ENCODE measurements at regions of chr10 and their contacts with region 1.

Region 1: GRCh38 chr10:124864421-124865193 is 63.0 kb downstream of the ABRAXAS2 start:
- DNase-seq: peak; percentile 86 to 91
- H3K4me3 ChIP-seq: no peak overlapping the region
- H3K27ac ChIP-seq: peak overlapping the region; percentile 85
- H3K4me1 ChIP-seq: peaks cover 25% of the 10 kb centered on the region
- H3K27me3 ChIP-seq: no peaks in the 10 kb centered on the region
- CTCF ChIP-seq: no peak

Region 2: DNA sequence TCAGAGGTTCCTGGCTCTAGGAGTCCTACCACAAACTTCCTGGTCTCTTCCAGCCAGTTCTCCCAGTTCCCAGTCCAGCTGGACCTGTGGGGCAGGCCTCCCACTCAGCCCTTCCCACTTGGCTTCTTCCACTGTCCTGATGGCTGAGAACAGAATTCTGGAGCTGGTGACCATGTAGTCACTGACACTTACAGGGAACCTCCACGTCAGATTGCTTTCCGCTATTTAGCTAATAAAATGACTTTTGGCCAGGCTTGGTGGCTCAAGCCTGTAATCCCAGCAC is 13.8 kb after region 1 on chr10:
- CTCF ChIA-PET with region 1: no interaction called
- POLR2A ChIA-PET with region 1: no interaction called
- intact Hi-C with region 1: loop called (anchors 1 kb)
- DNase-seq: peak in 1 of 2 experiments; percentile 56
- H3K4me3 ChIP-seq: no peak overlapping the region
- H3K27ac ChIP-seq: peak overlapping the region; percentile 46
- H3K4me1 ChIP-seq: peaks cover 22% of the 10 kb centered on the region
- H3K27me3 ChIP-seq: no peaks in the 10 kb centered on the region
- CTCF ChIP-seq: no peak

Region 3: GRCh38 chr10:124886195-124886594 is 21.6 kb after region 1 on chr10:
- CTCF ChIA-PET with region 1: no interaction called
- POLR2A ChIA-PET with region 1: interaction called, 22 read pairs
- intact Hi-C with region 1: no loop called
- DNase-seq: no peak
- H3K4me3 ChIP-seq: no peak overlapping the region
- H3K27ac ChIP-seq: no peak overlapping the region
- H3K4me1 ChIP-seq: no peaks in the 10 kb centered on the region
- H3K27me3 ChIP-seq: no peaks in the 10 kb centered on the region
- CTCF ChIP-seq: no peak

Region 4: DNA sequence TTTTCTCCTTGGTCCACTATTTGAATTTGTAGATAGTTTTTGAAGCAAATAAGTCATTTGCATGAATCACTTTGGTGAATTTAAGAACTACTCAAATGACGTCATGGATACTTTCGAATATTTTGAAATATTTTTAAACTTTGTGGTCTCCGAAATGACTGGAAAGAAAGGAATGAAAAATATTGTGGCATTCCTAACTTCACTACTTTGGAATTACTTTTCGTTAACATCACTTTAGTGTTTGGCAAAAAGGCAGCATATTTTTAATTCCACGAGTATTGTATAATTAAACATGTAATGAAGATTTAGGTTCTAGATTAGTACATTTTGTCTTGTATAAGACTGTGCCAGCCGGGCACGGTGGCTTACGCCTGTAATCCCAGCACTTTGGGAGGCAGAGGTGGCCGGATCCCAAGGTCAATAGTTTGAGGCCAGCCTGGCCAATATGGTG is 42.0 kb after region 1 on chr10:
- CTCF ChIA-PET with region 1: no interaction called
- POLR2A ChIA-PET with region 1: no interaction called
- intact Hi-C with region 1: loop called (anchors 2 kb)
- DNase-seq: no peak
- H3K4me3 ChIP-seq: no peak overlapping the region
- H3K27ac ChIP-seq: no peak overlapping the region
- H3K4me1 ChIP-seq: no peaks in the 10 kb centered on the region
- H3K27me3 ChIP-seq: no peaks in the 10 kb centered on the region
- CTCF ChIP-seq: no peak

Region 5: GRCh38 chr10:125076891-125077541 is 212.4 kb after region 1 on chr10:
- CTCF ChIA-PET with region 1: no interaction called
- POLR2A ChIA-PET with region 1: no interaction called
- intact Hi-C with region 1: no loop called
- DNase-seq: no peak
- H3K4me3 ChIP-seq: no peak overlapping the region
- H3K27ac ChIP-seq: no peak overlapping the region
- H3K4me1 ChIP-seq: no peaks in the 10 kb centered on the region
- H3K27me3 ChIP-seq: no peaks in the 10 kb centered on the region
- CTCF ChIP-seq: no peak

Measured in PC-9 (cell line).